ENCODE measurements at regions of chrX and their contacts with region 1.

Region 1: GRCh38 chrX:29496636-29497180 is 718.7 kb upstream of the MAGEB2 start:
- DNase-seq: no peak
- ATAC-seq: no peak

Region 2: DNA sequence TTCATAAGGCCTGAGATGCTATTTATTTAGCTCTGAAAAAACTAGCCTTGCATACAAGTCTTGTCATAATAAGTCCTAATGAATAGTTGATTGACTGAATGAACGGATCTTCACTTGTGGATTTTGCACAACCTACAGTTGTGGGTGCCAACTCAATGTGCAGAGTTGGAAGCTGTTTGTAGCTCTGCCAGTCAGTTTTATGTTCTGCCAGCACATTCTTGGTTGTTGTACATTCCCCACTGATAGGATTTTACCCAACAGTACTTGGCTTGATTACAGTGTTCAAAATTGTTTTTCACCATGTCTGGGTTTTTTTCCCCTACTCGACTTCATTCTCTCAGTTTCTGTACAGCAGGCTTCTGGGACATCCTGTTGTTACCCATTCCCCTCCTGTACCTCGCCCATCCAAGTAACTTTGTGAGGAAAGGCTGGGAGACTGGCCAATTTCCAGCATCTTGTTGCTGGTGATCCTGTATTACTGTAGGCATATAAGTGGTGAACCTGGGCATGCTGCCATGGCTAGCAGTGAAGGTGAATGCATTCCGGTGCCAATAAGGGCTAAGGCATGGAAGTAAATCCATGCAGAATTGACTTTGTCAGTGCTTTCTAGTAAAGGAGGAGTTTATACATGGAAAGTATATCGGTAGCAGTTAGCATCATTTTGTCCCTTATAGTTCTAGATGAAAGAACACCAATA is 886.6 kb before region 1 on chrX:
- intact Hi-C with region 1: no loop called
- DNase-seq: peak; percentile 74
- ATAC-seq: peak; percentile 78

Region 3: GRCh38 chrX:29518100-29518499 is 21.4 kb after region 1 on chrX:
- intact Hi-C with region 1: loop called (anchors 2 kb)
- DNase-seq: no peak
- ATAC-seq: no peak